B cell (primary cell): ENCODE measurements at regions of chr10 and their contacts with region 1.

Region 1: DNA sequence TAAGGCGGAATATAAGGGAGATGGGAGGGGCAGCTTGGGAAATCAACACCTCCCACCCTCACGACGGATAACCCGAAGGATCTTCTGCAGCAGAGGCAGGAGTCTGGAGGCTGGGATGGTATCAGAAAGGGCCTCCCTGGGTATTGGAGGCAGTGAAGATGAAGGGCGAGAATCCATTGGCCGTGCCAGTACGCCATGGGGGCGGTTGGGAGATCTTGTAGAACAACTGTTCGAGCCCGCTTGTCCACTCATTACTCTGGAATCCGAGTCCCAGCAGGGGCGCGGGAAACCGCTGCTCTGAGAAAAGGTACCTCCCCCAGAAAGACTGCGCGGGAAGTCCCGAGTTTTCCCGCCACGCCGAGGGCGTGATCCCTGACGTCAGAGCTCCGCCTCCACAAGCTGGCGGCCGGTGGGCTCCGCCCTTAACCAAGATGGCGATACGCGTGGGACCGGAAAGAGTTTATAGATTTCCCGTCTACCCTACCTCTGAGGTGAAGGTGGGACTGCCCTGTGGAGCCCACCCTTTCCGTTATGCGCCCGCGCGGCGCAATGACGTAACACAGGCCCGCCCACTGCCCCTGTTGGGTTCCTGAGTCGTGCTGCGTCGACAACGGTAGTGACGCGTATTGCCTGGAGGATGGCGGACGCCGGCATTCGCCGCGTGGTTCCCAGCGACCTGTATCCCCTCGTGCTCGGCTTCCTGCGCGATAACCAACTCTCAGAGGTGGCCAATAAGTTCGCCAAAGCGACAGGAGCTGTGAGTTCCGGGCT is at the start of gene NOLC1:
- DNase-seq: peak; percentile 100
- ATAC-seq: peak; percentile 97
- H3K4me3 ChIP-seq: peak within 1 kb of the TSS; percentile 22 to 99 (median 96)
- H3K4me3 Mint-ChIP-seq: peak within 1 kb of the TSS; percentile 95
- H3K27ac ChIP-seq: peak within 1 kb of the TSS; percentile 85 to 93
- H3K27ac Mint-ChIP-seq: peak within 1 kb of the TSS; percentile 95
- H3K4me1 ChIP-seq: peaks cover 15 to 24% of the 10 kb centered on the region in 2 donors
- H3K4me1 Mint-ChIP-seq: peaks cover 36% of the 10 kb centered on the region
- H3K27me3 ChIP-seq: no peaks in the 10 kb centered on the region
- H3K27me3 Mint-ChIP-seq: no peaks in the 10 kb centered on the region
- CTCF ChIP-seq: no peak
- total RNA-seq, gene NOLC1: 45.0 and 50.2 TPM in 2 replicates

Region 2: GRCh38 chr10:102055647-102056419 is 96.1 kb before region 1 on chr10 and contains the start of gene ARMH3:
- CTCF ChIA-PET with region 1: no interaction called
- POLR2A ChIA-PET with region 1: interaction called, 5 read pairs
- intact Hi-C with region 1: loop called (anchors 1 kb)
- DNase-seq: peak; percentile 94
- ATAC-seq: peak; percentile 91
- H3K4me3 ChIP-seq: peak within 1 kb of the TSS; percentile 76 to 99 (median 93)
- H3K4me3 Mint-ChIP-seq: peak within 1 kb of the TSS; percentile 99
- H3K27ac ChIP-seq: peak within 1 kb of the TSS; percentile 75 to 80
- H3K27ac Mint-ChIP-seq: peak within 1 kb of the TSS; percentile 98
- H3K4me1 ChIP-seq: peaks cover 15 to 26% of the 10 kb centered on the region in 2 donors
- H3K4me1 Mint-ChIP-seq: peaks cover 36% of the 10 kb centered on the region
- H3K27me3 ChIP-seq: no peaks in the 10 kb centered on the region
- H3K27me3 Mint-ChIP-seq: no peaks in the 10 kb centered on the region
- CTCF ChIP-seq: no peak
- total RNA-seq, gene ARMH3: 36.2 and 40.7 TPM in 2 replicates

Region 3: GRCh38 chr10:102114861-102115618 is 36.9 kb before region 1 on chr10:
- CTCF ChIA-PET with region 1: no interaction called
- POLR2A ChIA-PET with region 1: interaction called, 6 read pairs
- intact Hi-C with region 1: loop called (anchors 1 kb)
- DNase-seq: peak; percentile 87
- ATAC-seq: peak; percentile 79
- H3K4me3 ChIP-seq: peak overlapping the region; percentile 45 to 64 (median 57)
- H3K4me3 Mint-ChIP-seq: peak overlapping the region; percentile 86
- H3K27ac ChIP-seq: peak overlapping the region; percentile 60 to 94
- H3K27ac Mint-ChIP-seq: peak overlapping the region; percentile 91
- H3K4me1 ChIP-seq: peaks cover 58 to 73% of the 10 kb centered on the region in 2 donors
- H3K4me1 Mint-ChIP-seq: peaks cover 63% of the 10 kb centered on the region
- H3K27me3 ChIP-seq: no peaks in the 10 kb centered on the region
- H3K27me3 Mint-ChIP-seq: no peaks in the 10 kb centered on the region
- CTCF ChIP-seq: no peak

Region 4: GRCh38 chr10:102132563-102133372 is 19.2 kb before region 1 on chr10 and contains the start of gene PPRC1:
- CTCF ChIA-PET with region 1: interaction called, 5 read pairs
- POLR2A ChIA-PET with region 1: no interaction called
- intact Hi-C with region 1: loop called (anchors 1 kb)
- DNase-seq: peak; percentile 98
- ATAC-seq: peak; percentile 94
- H3K4me3 ChIP-seq: peak within 1 kb of the TSS; percentile 70 to 97 (median 82)
- H3K4me3 Mint-ChIP-seq: peak within 1 kb of the TSS; percentile 94
- H3K27ac ChIP-seq: peak within 1 kb of the TSS; percentile 79 to 88
- H3K27ac Mint-ChIP-seq: peak within 1 kb of the TSS; percentile 94
- H3K4me1 ChIP-seq: peaks cover 18 to 25% of the 10 kb centered on the region in 2 donors
- H3K4me1 Mint-ChIP-seq: peaks cover 36% of the 10 kb centered on the region
- H3K27me3 ChIP-seq: no peaks in the 10 kb centered on the region
- H3K27me3 Mint-ChIP-seq: no peaks in the 10 kb centered on the region
- CTCF ChIP-seq: peak; percentile 96
- total RNA-seq, gene PPRC1: 35.3 and 36.3 TPM in 2 replicates

Region 5: GRCh38 chr10:102195296-102195870 is 43.4 kb after region 1 on chr10:
- CTCF ChIA-PET with region 1: no interaction called
- POLR2A ChIA-PET with region 1: no interaction called
- intact Hi-C with region 1: no loop called
- DNase-seq: no peak
- ATAC-seq: no peak
- H3K4me3 ChIP-seq: no peak overlapping the region
- H3K4me3 Mint-ChIP-seq: no peak overlapping the region
- H3K27ac ChIP-seq: no peak overlapping the region
- H3K27ac Mint-ChIP-seq: no peak overlapping the region
- H3K4me1 ChIP-seq: no peaks in the 10 kb centered on the region
- H3K4me1 Mint-ChIP-seq: no peaks in the 10 kb centered on the region
- H3K27me3 ChIP-seq: no peaks in the 10 kb centered on the region
- H3K27me3 Mint-ChIP-seq: peaks cover 20% of the 10 kb centered on the region
- CTCF ChIP-seq: no peak

Region 6: DNA sequence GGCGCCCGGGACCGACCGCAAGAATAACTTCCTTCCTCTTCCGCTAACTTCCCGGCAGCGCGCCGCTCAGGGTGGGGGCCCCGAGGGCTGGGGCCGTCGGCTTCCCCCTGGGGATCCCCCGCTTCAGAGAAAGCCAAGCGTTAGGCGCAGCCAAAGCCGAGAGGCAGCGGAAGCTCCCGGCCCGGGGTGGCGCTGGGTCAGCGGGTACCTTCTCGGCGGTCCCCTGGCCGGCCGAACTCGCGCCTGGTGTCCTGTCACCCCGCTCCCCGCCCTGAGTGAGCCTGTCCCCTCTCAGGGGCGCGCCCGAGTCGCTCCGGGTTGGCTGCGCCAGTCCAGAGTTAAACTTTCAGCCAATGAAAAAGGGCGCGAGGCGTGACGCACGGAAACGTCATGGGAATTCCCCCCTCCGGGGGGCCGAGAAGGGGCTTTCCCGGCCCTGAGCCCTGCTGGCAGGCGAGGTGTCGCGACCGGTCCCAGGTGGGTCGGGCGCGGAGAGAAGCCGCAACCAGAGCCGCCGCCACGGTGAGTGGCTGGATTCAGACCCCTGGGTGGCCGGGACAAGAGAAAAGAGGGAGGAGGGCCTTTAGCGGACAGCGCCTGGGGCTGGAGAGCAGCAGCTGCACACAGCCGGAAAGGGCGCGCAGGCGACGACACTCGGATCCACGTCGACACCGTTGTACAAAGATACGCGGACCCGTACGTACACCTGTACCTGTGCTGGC is 242.3 kb after region 1 on chr10:
- CTCF ChIA-PET with region 1: no interaction called
- POLR2A ChIA-PET with region 1: no interaction called
- intact Hi-C with region 1: loop called (anchors 1 kb)
- DNase-seq: peak; percentile 100
- ATAC-seq: peak; percentile 76
- H3K4me3 ChIP-seq: peak overlapping the region; percentile 86 to 100 (median 99)
- H3K4me3 Mint-ChIP-seq: peak overlapping the region; percentile 95
- H3K27ac ChIP-seq: peak overlapping the region; percentile 98 to 100
- H3K27ac Mint-ChIP-seq: peak overlapping the region; percentile 99
- H3K4me1 ChIP-seq: peaks cover 35 to 44% of the 10 kb centered on the region in 2 donors
- H3K4me1 Mint-ChIP-seq: peaks cover 41% of the 10 kb centered on the region
- H3K27me3 ChIP-seq: no peaks in the 10 kb centered on the region
- H3K27me3 Mint-ChIP-seq: no peaks in the 10 kb centered on the region
- CTCF ChIP-seq: peak; percentile 38

Region 7: DNA sequence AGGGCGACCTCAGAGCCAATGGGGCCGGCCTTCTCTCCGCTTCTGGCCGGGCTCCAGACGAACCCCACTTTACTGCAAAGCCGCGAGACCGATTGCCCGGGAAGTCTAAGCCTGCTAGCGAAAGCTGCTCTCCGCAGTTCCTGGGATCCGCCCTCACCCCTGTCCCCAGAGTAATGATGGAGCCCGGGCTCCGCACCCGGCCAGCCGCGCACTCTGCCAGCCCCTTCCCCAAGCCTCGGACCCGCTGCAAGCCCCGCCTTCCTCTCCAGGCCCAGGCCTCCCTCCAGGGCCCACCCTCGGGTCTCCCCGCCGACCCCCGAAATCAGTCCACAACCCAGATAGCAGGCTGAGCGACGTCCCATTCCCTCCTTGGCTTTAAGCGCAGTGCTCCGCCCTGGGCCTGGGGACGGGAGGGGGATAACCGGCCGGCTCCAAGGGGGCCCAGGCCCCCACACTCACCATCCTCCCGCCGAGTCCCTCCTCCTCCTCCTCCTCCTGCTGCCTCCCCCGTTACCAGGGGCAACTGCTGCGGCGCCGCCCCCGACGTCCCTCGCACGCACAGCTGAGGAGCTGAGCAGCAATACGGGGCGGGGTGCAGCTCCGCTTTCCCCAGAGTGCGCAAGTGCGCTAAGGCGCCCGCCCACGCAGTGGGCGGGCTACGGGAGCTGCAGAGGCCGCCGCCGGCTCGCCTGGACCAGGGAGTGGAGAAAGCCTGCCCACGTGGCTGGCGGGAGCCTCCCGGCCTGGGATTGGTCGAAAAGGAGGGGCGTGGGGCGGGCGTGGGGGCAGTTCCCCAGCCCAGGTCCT is 562.1 kb after region 1 on chr10 and contains the start of gene ARL3:
- CTCF ChIA-PET with region 1: no interaction called
- POLR2A ChIA-PET with region 1: no interaction called
- intact Hi-C with region 1: loop called (anchors 5 kb)
- DNase-seq: peak; percentile 96
- ATAC-seq: peak; percentile 87
- H3K4me3 ChIP-seq: peak within 1 kb of the TSS; percentile 67 to 94 (median 70)
- H3K4me3 Mint-ChIP-seq: peak within 1 kb of the TSS; percentile 92
- H3K27ac ChIP-seq: peak within 1 kb of the TSS; percentile 64 to 92
- H3K27ac Mint-ChIP-seq: peak within 1 kb of the TSS; percentile 93
- H3K4me1 ChIP-seq: peaks cover 15 to 21% of the 10 kb centered on the region in 2 donors
- H3K4me1 Mint-ChIP-seq: peaks cover 36% of the 10 kb centered on the region
- H3K27me3 ChIP-seq: no peaks in the 10 kb centered on the region
- H3K27me3 Mint-ChIP-seq: no peaks in the 10 kb centered on the region
- CTCF ChIP-seq: peak; percentile 72
- total RNA-seq, gene ARL3: 5.5 and 6.3 TPM in 2 replicates